Activated CD4-positive, alpha-beta T cell treated with anti-CD3 and anti-CD28 coated beads, Interleukin-2, amount 10 ng/mL, durations not matched to agents 7 days and 5 days (primary cell): ENCODE measurements at regions of chr1 and their contacts with region 1.

Region 1: GRCh38 chr1:999725-1000356 is at the start of gene HES4:
- DNase-seq: peak; percentile 59
- H3K4me3 Mint-ChIP-seq: peak within 1 kb of the TSS; percentile 53
- H3K27ac Mint-ChIP-seq: peak within 1 kb of the TSS; percentile 76
- H3K4me1 Mint-ChIP-seq: peaks cover 21% of the 10 kb centered on the region
- H3K27me3 Mint-ChIP-seq: peaks cover 40% of the 10 kb centered on the region
- total RNA-seq, gene HES4: 0.42 to 0.46 TPM

Region 2: GRCh38 chr1:941588-942383 is 58.1 kb before region 1 on chr1:
- CTCF ChIA-PET with region 1: no interaction called
- POLR2A ChIA-PET with region 1: no interaction called
- DNase-seq: no peak
- H3K4me3 Mint-ChIP-seq: no peak overlapping the region
- H3K27ac Mint-ChIP-seq: no peak overlapping the region
- H3K4me1 Mint-ChIP-seq: peaks cover 4% of the 10 kb centered on the region
- H3K27me3 Mint-ChIP-seq: peaks cover 32% of the 10 kb centered on the region

Region 3: DNA sequence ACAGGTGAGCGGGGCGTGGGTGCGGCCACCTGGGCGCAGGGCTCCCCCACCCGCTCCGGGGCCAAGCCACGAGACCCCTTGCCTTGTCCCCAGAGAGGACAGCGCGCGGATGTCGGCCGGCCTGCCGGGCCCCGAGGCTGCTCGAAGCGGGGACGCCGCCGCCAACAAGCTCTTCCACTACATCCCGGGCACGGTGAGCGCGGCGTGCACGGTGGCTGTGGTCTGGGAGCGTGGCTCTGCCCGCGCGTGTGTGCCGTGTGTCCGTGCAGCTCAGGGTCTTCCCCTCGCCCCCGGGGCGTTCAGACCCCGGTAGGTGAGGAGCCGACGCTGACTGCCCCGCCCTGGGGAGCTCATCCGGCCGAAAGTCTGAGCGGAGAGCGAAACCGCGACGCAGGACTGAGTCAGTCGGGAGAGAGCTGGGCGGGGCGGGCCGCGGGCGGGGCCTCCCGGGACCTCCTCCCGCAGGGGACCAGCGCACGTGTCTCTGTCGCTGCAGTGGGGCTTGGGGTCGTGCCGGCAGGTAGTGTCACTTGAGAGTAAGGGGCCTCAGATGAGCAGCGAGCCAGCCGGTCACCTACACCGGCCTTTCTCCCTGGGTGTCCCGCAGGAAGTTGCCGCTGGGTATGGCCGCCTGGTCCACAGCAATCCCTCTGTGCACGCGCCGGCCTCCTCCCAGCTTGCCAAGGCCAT is 33.1 kb before region 1 on chr1:
- CTCF ChIA-PET with region 1: no interaction called
- POLR2A ChIA-PET with region 1: no interaction called
- DNase-seq: peak; percentile 83
- H3K4me3 Mint-ChIP-seq: peak overlapping the region; percentile 76
- H3K27ac Mint-ChIP-seq: peak overlapping the region; percentile 79
- H3K4me1 Mint-ChIP-seq: peaks cover 13% of the 10 kb centered on the region
- H3K27me3 Mint-ChIP-seq: peaks cover 11% of the 10 kb centered on the region

Region 4: GRCh38 chr1:983799-984473 is 15.9 kb before region 1 on chr1:
- CTCF ChIA-PET with region 1: interaction called, 13 read pairs
- POLR2A ChIA-PET with region 1: no interaction called
- DNase-seq: peak; percentile 59
- H3K4me3 Mint-ChIP-seq: no peak overlapping the region
- H3K27ac Mint-ChIP-seq: no peak overlapping the region
- H3K4me1 Mint-ChIP-seq: no peaks in the 10 kb centered on the region
- H3K27me3 Mint-ChIP-seq: peaks cover 30% of the 10 kb centered on the region

Region 5: GRCh38 chr1:1019122-1019999 is 19.5 kb after region 1 on chr1:
- CTCF ChIA-PET with region 1: interaction called, 67 read pairs
- POLR2A ChIA-PET with region 1: no interaction called
- DNase-seq: peak; percentile 78
- H3K4me3 Mint-ChIP-seq: peak overlapping the region; percentile 71
- H3K27ac Mint-ChIP-seq: peak overlapping the region; percentile 76
- H3K4me1 Mint-ChIP-seq: peaks cover 38% of the 10 kb centered on the region
- H3K27me3 Mint-ChIP-seq: peaks cover 14% of the 10 kb centered on the region

Region 6: GRCh38 chr1:1599920-1600860 is 600.3 kb after region 1 on chr1 and contains the start of gene FNDC10:
- CTCF ChIA-PET with region 1: no interaction called
- POLR2A ChIA-PET with region 1: no interaction called
- DNase-seq: no peak
- H3K4me3 Mint-ChIP-seq: peak within 1 kb of the TSS; percentile 77
- H3K27ac Mint-ChIP-seq: peak within 1 kb of the TSS; percentile 83
- H3K4me1 Mint-ChIP-seq: peaks cover 7% of the 10 kb centered on the region
- H3K27me3 Mint-ChIP-seq: peaks cover 8% of the 10 kb centered on the region
- total RNA-seq, gene FNDC10: 6.2 to 7.9 TPM